Heart left ventricle (tissue), 16 donors: ENCODE measurements at regions of chr3 and their contacts with region 1.

Region 1: DNA sequence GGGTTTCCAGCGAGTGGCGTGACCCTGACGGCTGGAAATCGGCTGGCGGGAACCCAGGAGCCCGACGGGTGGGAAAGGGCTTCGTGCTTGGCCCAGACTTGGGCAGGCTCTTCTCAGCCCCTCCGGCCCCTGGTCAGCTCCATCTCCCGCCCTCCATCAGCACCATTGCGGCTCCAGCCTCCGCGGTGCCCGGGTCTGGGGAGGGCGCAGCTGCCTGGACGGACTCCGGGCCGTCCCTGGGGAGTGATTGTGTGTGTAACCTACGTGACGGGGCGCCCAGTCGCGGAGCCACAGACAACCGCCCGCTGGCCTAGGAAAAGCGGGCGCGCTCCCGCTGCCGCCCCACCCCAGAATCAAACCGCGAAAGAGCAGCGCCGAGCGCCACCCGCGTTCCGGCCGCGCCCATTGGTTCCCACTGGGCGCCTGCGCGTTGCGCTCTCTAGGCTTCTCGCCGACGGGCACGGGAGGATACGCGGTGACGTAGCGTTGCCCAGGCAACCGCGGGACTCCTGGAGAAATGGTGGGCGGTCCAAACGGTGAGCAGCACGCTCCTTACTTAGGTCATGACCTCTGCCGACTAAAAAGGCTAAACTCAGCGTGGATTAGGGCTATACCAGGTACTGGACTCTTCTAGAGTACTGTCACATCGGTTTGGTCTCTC is at the start of gene CFAP20DC:
- DNase-seq: peak; percentile 85 to 95 (median 93)
- ATAC-seq: peak; percentile 86 to 100 (median 99)
- H3K4me3 ChIP-seq: peak within 1 kb of the TSS; percentile 34 to 73 (median 62)
- H3K27ac ChIP-seq: peak within 1 kb of the TSS in 8 of 12 donors; percentile 7 to 52 (median 26)
- H3K4me1 ChIP-seq: peaks cover 0 to 13% (median 0%) of the 10 kb centered on the region in 12 donors
- H3K27me3 ChIP-seq: no peaks in the 10 kb centered on the region
- CTCF ChIP-seq: no peak
- POLR2A ChIP-seq: peak in 1 of 2 donors; percentile 67
- total RNA-seq, gene CFAP20DC: 0.07 to 0.27 (median 0.13) TPM in 5 of 9 donors, not detected in the others

Region 2: GRCh38 chr3:58640700-58641372 is 409.0 kb before region 1 on chr3:
- intact Hi-C with region 1: loop called (anchors 2 to 10 kb)
- DNase-seq: peak; percentile 63 to 84 (median 75)
- ATAC-seq: peak; percentile 76 to 92 (median 88)
- H3K4me3 ChIP-seq: no peak overlapping the region
- H3K27ac ChIP-seq: no peak overlapping the region
- H3K4me1 ChIP-seq: peaks cover 0 to 6% (median 0%) of the 10 kb centered on the region in 12 donors
- H3K27me3 ChIP-seq: peaks cover 0 to 5% (median 0%) of the 10 kb centered on the region in 9 donors
- CTCF ChIP-seq: peak; percentile 66 to 94 (median 85)
- POLR2A ChIP-seq: no peak

Region 3: DNA sequence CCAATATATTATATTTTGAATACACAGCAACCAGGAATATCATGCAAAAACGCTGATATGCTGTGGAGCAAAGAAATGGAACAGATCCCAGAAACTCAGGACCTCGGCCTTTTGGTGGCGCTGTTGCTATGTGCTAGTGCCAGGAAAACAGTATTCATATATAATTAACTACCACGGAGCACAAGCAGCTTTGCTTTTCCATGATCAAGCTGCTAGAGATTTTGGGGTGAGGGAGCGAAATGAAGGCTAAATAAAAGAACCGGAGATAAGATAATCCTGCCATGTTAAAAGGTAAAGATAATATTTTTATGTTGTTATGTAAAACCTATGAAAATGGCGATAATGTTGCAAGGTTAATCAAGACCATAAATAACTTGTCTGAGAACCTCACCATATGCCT is 225.5 kb before region 1 on chr3:
- intact Hi-C with region 1: loop called in 5 of 10 experiments (anchors 2 to 10 kb)
- DNase-seq: peak in 3 of 5 donors; percentile 8 to 27 (median 22)
- ATAC-seq: no peak
- H3K4me3 ChIP-seq: no peak overlapping the region
- H3K27ac ChIP-seq: no peak overlapping the region
- H3K4me1 ChIP-seq: no peaks in the 10 kb centered on the region
- H3K27me3 ChIP-seq: no peaks in the 10 kb centered on the region
- CTCF ChIP-seq: peak; percentile 14 to 61 (median 46)
- POLR2A ChIP-seq: no peak

Region 4: GRCh38 chr3:58829321-58830000 is 220.3 kb before region 1 on chr3:
- intact Hi-C with region 1: loop called in 6 of 10 experiments (anchors 2 to 10 kb)
- DNase-seq: no peak
- ATAC-seq: no peak
- H3K4me3 ChIP-seq: no peak overlapping the region
- H3K27ac ChIP-seq: no peak overlapping the region
- H3K4me1 ChIP-seq: no peaks in the 10 kb centered on the region
- H3K27me3 ChIP-seq: no peaks in the 10 kb centered on the region
- CTCF ChIP-seq: no peak
- POLR2A ChIP-seq: no peak

Region 5: DNA sequence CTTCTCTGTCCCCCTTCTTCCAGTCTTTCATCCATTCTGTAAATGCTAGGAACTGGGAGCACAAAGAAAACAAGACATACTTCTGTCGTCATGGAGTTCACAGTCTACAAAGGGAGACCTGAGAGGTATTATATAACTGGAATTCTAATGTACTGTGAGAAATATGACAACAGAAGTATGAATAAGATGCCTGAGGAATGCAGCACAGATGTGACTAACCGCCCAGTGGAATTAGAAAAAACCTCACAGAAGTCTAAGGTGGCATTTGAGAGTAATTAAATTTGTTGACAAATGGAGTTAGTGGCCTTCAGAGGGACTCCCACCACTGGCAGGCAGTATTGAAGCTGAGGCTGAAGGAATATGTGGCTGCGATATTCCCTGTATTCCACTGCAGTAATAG is 214.7 kb before region 1 on chr3:
- intact Hi-C with region 1: loop called in 1 of 10 experiments (anchors 10 kb)
- DNase-seq: no peak
- ATAC-seq: no peak
- H3K4me3 ChIP-seq: no peak overlapping the region
- H3K27ac ChIP-seq: no peak overlapping the region
- H3K4me1 ChIP-seq: no peaks in the 10 kb centered on the region
- H3K27me3 ChIP-seq: no peaks in the 10 kb centered on the region
- CTCF ChIP-seq: no peak
- POLR2A ChIP-seq: no peak

Region 6: GRCh38 chr3:58994746-58995330 is 55.0 kb before region 1 on chr3:
- intact Hi-C with region 1: loop called in 1 of 10 experiments (anchors 5 kb)
- DNase-seq: no peak
- ATAC-seq: no peak
- H3K4me3 ChIP-seq: no peak overlapping the region
- H3K27ac ChIP-seq: no peak overlapping the region
- H3K4me1 ChIP-seq: no peaks in the 10 kb centered on the region
- H3K27me3 ChIP-seq: no peaks in the 10 kb centered on the region
- CTCF ChIP-seq: peak; percentile 36 to 71 (median 57)
- POLR2A ChIP-seq: no peak

Region 7: DNA sequence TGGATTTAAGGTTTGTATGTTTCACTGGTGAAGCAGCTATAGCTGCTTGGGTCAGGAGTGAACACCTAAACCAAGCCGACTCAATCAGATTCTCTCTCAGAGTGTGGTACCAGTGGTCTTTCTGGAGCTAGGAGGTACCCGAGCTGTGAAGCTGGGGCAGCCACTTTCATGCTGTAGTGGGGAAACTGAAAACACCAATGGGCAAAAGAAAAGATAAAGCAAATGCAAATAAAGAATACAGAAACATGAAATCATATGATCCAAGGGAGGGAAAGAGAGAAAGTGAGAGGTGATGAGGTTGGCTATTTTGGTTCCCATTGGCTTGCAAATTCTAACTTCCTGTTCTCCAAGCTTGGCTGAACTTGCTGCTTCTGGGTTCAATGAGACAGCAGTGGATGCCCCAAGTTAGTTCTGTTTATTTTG is 212.3 kb after region 1 on chr3:
- intact Hi-C with region 1: no loop called
- DNase-seq: no peak
- ATAC-seq: no peak
- H3K4me3 ChIP-seq: no peak overlapping the region
- H3K27ac ChIP-seq: no peak overlapping the region
- H3K4me1 ChIP-seq: peaks cover 0 to 16% (median 0%) of the 10 kb centered on the region in 12 donors
- H3K27me3 ChIP-seq: no peaks in the 10 kb centered on the region
- CTCF ChIP-seq: no peak
- POLR2A ChIP-seq: no peak